Cardiac septum (tissue), 1 donor: ENCODE measurements at regions of chr4 and their contacts with region 1.

Region 1: GRCh38 chr4:46844325-46844917 is 64.6 kb downstream of the COX7B2 start:
- DNase-seq: no peak

Region 2: GRCh38 chr4:47032415-47033106 is 188.1 kb after region 1 on chr4:
- intact Hi-C with region 1: loop called (anchors 2 kb)
- DNase-seq: peak; percentile 81

Region 3: DNA sequence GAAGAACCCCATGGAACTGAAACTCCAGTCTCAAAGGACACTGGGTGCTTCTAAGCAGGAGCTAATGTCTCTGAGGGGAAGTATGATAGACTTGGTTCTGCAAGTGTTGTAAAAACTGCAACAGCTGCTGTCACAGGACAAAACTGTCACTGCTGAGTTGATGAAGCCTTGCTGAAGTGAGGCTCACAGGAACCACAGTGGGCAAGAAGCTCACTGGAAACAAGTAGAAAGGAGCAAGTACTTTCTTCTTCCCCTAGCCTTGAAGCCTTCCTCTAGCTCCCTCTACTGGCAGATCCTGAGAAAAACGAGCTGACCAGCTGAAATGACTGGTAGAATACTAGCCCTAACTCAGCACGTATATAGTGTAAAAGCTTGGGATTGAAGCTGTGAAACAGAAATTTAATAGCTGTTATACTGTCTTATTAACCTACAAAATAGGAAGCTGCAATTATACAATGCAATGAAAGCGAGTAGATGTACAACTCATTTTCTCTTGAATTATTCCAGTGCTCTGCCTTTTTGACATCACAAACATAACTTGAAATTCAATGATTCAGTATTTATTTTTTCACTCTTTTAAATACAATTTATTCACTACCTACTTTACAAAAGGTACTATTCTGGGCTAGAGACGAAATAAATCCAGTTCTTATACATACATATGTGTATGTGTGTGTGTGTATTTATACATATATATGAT is 278.3 kb after region 1 on chr4:
- intact Hi-C with region 1: loop called (anchors 5 kb)
- DNase-seq: no peak

Region 4: GRCh38 chr4:47203593-47203992 is 359.2 kb after region 1 on chr4:
- intact Hi-C with region 1: no loop called
- DNase-seq: no peak

Region 5: GRCh38 chr4:47383829-47384427 is 539.5 kb after region 1 on chr4:
- intact Hi-C with region 1: loop called (anchors 5 kb)
- DNase-seq: no peak